ENCODE measurements at regions of chr15 and their contacts with region 1.

Region 1: DNA sequence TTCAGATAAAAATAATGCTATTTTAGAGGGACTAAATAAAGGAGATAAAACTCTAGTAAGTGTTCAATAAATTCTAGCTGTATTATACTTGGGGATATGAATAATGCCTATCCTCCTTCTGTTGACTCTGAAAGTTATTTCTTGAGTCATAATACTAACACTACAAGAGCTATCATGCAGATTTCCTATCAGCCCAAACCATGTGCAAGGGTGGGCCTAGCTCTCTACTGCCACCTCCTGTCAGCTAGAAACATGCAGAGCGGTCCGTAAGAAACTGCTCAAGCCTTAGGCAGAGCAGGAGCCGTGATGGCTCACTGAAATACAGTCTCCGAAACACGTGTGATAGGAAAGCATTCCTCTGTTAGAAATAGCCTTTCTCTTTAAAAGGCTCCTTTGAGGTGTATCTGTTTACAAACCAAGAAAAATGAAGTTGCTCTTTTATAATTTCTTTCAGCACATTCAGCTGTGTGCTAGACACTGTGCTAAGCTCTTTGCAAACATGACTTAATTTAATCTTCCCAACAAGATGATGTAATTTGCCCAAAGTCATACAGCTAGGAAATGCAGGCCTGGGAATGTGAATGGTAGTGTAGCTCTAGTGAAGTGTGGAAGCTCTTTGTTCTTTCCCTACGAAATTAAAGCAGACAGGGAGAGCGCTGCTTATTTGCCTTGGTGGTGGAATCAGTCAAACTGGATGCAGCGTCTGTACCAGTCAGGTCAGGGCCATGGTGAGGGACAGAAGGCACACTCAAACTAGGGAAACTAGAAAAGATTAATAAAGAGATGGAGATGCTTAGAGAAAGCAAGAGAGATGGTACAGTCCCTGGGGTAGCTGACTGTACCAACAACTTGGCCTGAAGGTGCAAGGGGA is 43.1 kb downstream of the MTHFS start:
- DNase-seq: peak; percentile 41 to 83 (median 73)
- H3K4me3 ChIP-seq: no peak overlapping the region
- H3K27ac ChIP-seq: no peak overlapping the region
- H3K27me3 ChIP-seq: no peaks in the 10 kb centered on the region
- CTCF ChIP-seq: peak; percentile 67 to 99 (median 93)

Region 2: GRCh38 chr15:79339564-79340314 is 514.0 kb before region 1 on chr15:
- intact Hi-C with region 1: loop called (anchors 5 kb)
- DNase-seq: peak in 1 of 10 donors; percentile 32
- H3K4me3 ChIP-seq: no peak overlapping the region
- H3K27ac ChIP-seq: no peak overlapping the region
- H3K27me3 ChIP-seq: no peaks in the 10 kb centered on the region
- CTCF ChIP-seq: peak; percentile 60 to 90 (median 81)

Region 3: GRCh38 chr15:79769069-79769481 is 84.6 kb before region 1 on chr15:
- intact Hi-C with region 1: loop called in 1 of 2 experiments (anchors 5 kb)
- DNase-seq: peak in 1 of 10 donors; percentile 7
- H3K4me3 ChIP-seq: no peak overlapping the region
- H3K27ac ChIP-seq: no peak overlapping the region
- H3K27me3 ChIP-seq: peaks cover 0 to 5% (median 0%) of the 10 kb centered on the region in 45 donors
- CTCF ChIP-seq: peak in 29 of 56 donors; percentile 8 to 64 (median 25)

Region 4: GRCh38 chr15:80210612-80211573 is 357.2 kb after region 1 on chr15:
- intact Hi-C with region 1: no loop called
- DNase-seq: peak in 1 of 10 donors; percentile 66
- H3K4me3 ChIP-seq: no peak overlapping the region
- H3K27ac ChIP-seq: no peak overlapping the region
- H3K27me3 ChIP-seq: peaks cover 0 to 10% (median 0%) of the 10 kb centered on the region in 45 donors
- CTCF ChIP-seq: no peak

Measured in dorsolateral prefrontal cortex (tissue), 120 donors.